ENCODE measurements at regions of chr3 and their contacts with region 1.

Region 1: DNA sequence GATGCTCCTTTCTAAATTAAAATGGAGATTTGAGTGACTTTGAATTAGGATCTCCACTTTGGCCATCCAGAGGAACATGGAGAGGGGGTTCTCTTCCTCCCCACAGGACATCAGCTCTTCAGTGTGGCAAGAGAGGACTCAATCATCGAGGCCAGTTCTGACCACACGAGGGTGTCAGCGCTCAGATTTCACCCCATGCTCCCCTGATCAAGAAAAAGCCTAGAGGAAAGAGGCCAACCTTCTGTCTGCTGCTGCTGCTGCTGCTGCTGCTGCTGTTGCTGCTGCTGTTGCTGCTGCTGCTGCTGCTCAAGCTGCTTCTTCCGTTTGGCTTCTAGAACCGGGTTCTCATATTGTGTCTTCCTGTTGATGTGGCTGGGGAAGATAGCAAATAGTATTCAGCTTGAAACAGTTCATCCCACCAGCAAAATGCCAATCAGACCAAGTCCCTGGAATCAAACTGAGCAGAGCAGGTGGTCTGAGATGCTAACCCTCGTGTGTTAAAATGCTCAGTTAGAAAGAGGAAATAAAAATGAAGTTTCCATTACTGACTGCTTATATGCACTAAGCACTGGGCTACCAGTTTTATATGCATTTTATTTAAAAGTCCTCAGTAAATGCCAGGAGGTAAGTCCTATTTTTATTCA is 599.0 kb downstream of the MAGI1 start:
- DNase-seq: peak; percentile 60
- H3K4me3 ChIP-seq: no peak overlapping the region; a peak in 1 of 4 replicates
- H3K27ac ChIP-seq: peak overlapping the region in 1 of 2 experiments; percentile 28; a peak in 2 of 4 replicates
- H3K4me1 ChIP-seq: peaks cover 0 to 11% of the 10 kb centered on the region in 2 experiments; a peak in 2 of 4 replicates
- H3K27me3 ChIP-seq: no peaks in the 10 kb centered on the region
- CTCF ChIP-seq: peak; percentile 69
- EP300 ChIP-seq: no peak
- RAD21 ChIP-seq: peak; percentile 92

Region 2: DNA sequence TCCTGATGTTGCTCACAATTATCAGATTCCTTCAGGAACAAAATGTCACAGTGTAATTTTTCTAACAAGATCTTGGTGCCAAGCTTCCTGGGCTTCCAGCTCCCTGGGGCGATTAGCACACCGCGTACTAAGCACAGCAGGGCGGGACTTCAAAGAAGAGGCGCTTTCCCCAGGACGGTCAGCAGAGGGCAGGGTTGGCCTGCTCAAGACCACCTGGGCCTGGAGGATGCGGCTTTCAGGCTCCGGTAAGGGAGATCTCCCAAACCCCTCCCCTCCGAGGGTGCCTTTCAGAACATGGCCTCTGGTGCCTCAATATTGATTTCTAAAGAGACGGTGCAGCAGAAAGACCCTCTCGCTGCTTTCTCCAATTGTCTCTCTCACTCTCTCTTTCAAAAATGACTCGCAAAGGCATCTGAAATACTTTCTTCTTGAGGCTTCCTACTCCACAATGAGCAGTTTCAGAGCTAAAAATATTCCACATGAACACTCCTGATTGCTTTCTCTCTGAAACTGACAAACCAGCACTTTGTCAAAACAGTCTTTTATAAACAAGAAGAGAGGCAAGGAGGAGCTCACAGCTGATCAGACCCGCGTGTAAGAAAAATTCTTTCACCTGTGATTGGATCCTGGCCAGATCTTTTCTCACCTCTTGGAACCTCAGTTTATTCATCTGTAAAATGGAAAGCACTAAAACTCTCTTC is 906.0 kb before region 1 on chr3:
- CTCF ChIA-PET with region 1: interaction called, 94 read pairs
- POLR2A ChIA-PET with region 1: no interaction called
- DNase-seq: peak; percentile 82
- H3K4me3 ChIP-seq: no peak overlapping the region
- H3K27ac ChIP-seq: peak overlapping the region in 1 of 2 experiments; percentile 74; a peak in 2 of 4 replicates
- H3K4me1 ChIP-seq: peaks cover 0 to 6% of the 10 kb centered on the region in 2 experiments; a peak in 2 of 4 replicates
- H3K27me3 ChIP-seq: no peaks in the 10 kb centered on the region
- CTCF ChIP-seq: peak; percentile 92
- EP300 ChIP-seq: 0 out of 4 replicates have a peak, but pooled peaks of 1 of the 2 experiments have one; percentile 11
- RAD21 ChIP-seq: peak; percentile 93

Region 3: DNA sequence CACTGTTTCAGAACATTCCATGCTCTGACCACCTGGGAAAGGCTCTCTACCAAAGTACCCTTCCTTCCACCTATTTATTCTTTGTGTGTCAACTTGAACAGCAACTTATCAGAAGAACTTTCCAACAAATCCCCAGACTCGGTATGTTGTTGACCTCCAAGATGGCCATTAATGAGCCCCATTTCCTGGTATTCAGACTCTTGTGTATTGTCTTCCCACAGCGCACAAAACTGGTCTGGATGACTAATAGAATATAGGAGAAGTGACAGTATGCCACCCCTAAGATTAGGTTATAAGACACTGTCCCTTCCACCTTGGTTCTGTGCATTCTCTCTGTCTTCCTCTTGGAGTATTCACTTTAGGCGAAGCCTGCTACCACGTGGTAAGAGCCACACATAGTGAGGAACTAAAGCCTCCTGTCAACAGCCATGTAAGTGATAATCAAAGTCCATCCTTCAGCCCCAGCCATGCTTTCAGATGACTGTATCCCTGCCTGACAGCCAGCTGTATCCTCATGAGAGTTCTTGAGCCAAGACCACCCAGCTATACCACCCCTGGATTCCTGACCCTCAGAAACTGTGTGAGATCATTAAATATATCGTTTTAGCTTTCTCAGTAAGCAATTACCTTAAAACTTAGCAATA is 117.3 kb after region 1 on chr3:
- CTCF ChIA-PET with region 1: interaction called, 13 read pairs
- POLR2A ChIA-PET with region 1: no interaction called
- DNase-seq: no peak
- H3K4me3 ChIP-seq: no peak overlapping the region
- H3K27ac ChIP-seq: no peak overlapping the region
- H3K4me1 ChIP-seq: peaks cover 10 to 13% of the 10 kb centered on the region in 2 experiments
- H3K27me3 ChIP-seq: no peaks in the 10 kb centered on the region
- CTCF ChIP-seq: no peak
- EP300 ChIP-seq: no peak
- RAD21 ChIP-seq: no peak

Region 4: GRCh38 chr3:65597226-65597951 is 157.6 kb after region 1 on chr3:
- CTCF ChIA-PET with region 1: interaction called, 51 read pairs
- POLR2A ChIA-PET with region 1: interaction called, 4 read pairs
- DNase-seq: peak; percentile 87
- H3K4me3 ChIP-seq: peak overlapping the region; percentile 55 to 58
- H3K27ac ChIP-seq: peak overlapping the region in 1 of 2 experiments; percentile 94; a peak in 2 of 4 replicates
- H3K4me1 ChIP-seq: peaks cover 0 to 17% of the 10 kb centered on the region in 2 experiments; a peak in 2 of 4 replicates
- H3K27me3 ChIP-seq: no peaks in the 10 kb centered on the region
- CTCF ChIP-seq: no peak
- EP300 ChIP-seq: peak in 1 of 2 experiments; percentile 42; a peak in 2 of 4 replicates
- RAD21 ChIP-seq: peak; percentile 27; the same call in 1 of the 2 replicates

Region 5: GRCh38 chr3:65685621-65686235 is 246.0 kb after region 1 on chr3:
- CTCF ChIA-PET with region 1: interaction called, 16 read pairs
- POLR2A ChIA-PET with region 1: no interaction called
- DNase-seq: no peak
- H3K4me3 ChIP-seq: no peak overlapping the region
- H3K27ac ChIP-seq: no peak overlapping the region
- H3K4me1 ChIP-seq: peaks cover 2 to 9% of the 10 kb centered on the region in 2 experiments; a peak in 2 of 4 replicates
- H3K27me3 ChIP-seq: no peaks in the 10 kb centered on the region
- CTCF ChIP-seq: no peak
- EP300 ChIP-seq: no peak
- RAD21 ChIP-seq: no peak

Region 6: DNA sequence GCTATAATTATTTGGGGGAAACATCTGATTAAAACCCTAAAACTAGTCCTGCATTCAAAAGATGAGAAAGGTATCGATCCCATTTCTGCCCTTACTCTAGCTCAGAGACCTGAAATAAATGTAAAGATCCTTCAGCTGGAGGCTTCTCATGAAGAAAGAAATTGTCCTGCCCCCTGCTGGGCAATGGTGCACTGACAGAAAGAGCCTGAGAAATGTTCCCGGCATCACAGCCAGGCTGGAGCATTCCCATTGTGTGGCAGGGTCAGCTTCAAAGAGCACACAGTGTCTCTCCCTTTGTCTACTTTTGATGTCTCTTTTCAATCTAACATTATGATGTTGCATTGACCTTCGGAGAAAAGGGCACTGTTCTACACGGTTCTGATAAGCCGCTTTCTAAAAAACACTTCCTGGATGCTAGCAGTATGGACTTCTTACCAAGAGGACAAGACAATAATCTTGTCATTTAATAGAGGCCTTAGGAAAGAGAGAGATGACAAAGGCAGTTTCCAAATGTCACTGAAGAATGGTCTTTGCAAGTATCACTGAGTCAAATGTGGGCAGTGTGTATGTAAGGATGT is 311.4 kb after region 1 on chr3:
- CTCF ChIA-PET with region 1: interaction called, 30 read pairs
- POLR2A ChIA-PET with region 1: no interaction called
- DNase-seq: peak; percentile 52
- H3K4me3 ChIP-seq: peak overlapping the region in 1 of 2 experiments; percentile 5; a peak in 1 of 4 replicates
- H3K27ac ChIP-seq: no peak overlapping the region
- H3K4me1 ChIP-seq: peaks cover 0 to 3% of the 10 kb centered on the region in 2 experiments; a peak in 1 of 4 replicates
- H3K27me3 ChIP-seq: no peaks in the 10 kb centered on the region
- CTCF ChIP-seq: peak; percentile 80
- EP300 ChIP-seq: no peak
- RAD21 ChIP-seq: peak; percentile 68

Region 7: GRCh38 chr3:66195347-66195783 is 755.6 kb after region 1 on chr3:
- CTCF ChIA-PET with region 1: interaction called, 11 read pairs
- POLR2A ChIA-PET with region 1: no interaction called
- DNase-seq: peak; percentile 87
- H3K4me3 ChIP-seq: peak overlapping the region; percentile 43 to 47
- H3K27ac ChIP-seq: no peak overlapping the region
- H3K4me1 ChIP-seq: peaks cover 3 to 5% of the 10 kb centered on the region in 2 experiments; a peak in 2 of 4 replicates
- H3K27me3 ChIP-seq: no peaks in the 10 kb centered on the region
- CTCF ChIP-seq: peak; percentile 50
- EP300 ChIP-seq: no peak
- RAD21 ChIP-seq: peak; percentile 54

Measured in SK-N-SH (cell line).